ENCODE measurements at regions of chr5 and their contacts with region 1.

Region 1: DNA sequence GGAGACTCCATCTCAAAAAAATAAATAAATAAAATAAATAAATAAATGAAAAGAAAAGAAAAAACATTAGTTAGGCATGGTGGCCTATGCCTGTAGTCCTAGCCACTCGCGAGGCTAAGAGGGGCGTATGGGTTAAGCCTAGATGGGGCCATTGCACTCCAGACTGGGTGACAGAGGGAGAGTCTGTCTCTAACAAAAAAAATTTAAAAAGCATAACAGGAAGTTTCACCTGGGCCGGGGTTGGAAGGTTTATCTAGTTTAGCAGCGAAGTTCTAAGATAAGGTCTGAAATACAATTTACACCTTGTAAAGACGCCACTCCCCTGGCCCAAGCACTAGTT is 18.0 kb downstream of the ZMAT2 start:
- DNase-seq: no peak
- ATAC-seq: peak; percentile 18 to 47
- H3K4me3 ChIP-seq: peak overlapping the region; percentile 44
- H3K27ac ChIP-seq: peak overlapping the region; percentile 84 to 92
- H3K4me1 ChIP-seq: no peaks in the 10 kb centered on the region
- CTCF ChIP-seq: no peak
- EP300 ChIP-seq: no peak
- POLR2A ChIP-seq: no peak
- RAD21 ChIP-seq: no peak

Region 2: DNA sequence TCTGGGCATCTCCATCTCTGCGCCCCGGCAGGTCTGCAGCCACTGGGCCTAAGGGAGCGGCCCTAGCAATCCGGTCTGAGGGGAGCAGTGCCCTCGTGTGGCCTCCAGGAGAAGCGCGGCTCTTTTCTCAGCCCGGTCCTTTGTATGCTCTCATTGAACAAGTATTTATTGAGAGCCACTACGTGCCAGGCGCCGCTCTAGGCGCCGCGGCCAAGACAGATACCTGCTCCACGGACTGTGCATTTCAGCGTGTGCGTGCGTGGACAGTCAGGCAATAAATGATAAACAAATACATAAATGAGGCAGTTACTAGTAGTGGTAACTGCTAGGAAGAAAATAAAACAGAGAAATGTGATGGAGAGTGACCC is 360.5 kb before region 1 on chr5:
- CTCF ChIA-PET with region 1: interaction called, 15 read pairs
- POLR2A ChIA-PET with region 1: no interaction called
- DNase-seq: peak; percentile 89 to 93
- ATAC-seq: peak; percentile 83 to 96
- H3K4me3 ChIP-seq: no peak overlapping the region
- H3K27ac ChIP-seq: peak overlapping the region; percentile 47 to 66; a peak in 5 of 6 replicates
- H3K4me1 ChIP-seq: peaks cover 5% of the 10 kb centered on the region; the same call in 1 of the 3 replicates
- CTCF ChIP-seq: peak; percentile 89
- EP300 ChIP-seq: no peak
- POLR2A ChIP-seq: no peak
- RAD21 ChIP-seq: peak; percentile 81 to 82

Region 3: DNA sequence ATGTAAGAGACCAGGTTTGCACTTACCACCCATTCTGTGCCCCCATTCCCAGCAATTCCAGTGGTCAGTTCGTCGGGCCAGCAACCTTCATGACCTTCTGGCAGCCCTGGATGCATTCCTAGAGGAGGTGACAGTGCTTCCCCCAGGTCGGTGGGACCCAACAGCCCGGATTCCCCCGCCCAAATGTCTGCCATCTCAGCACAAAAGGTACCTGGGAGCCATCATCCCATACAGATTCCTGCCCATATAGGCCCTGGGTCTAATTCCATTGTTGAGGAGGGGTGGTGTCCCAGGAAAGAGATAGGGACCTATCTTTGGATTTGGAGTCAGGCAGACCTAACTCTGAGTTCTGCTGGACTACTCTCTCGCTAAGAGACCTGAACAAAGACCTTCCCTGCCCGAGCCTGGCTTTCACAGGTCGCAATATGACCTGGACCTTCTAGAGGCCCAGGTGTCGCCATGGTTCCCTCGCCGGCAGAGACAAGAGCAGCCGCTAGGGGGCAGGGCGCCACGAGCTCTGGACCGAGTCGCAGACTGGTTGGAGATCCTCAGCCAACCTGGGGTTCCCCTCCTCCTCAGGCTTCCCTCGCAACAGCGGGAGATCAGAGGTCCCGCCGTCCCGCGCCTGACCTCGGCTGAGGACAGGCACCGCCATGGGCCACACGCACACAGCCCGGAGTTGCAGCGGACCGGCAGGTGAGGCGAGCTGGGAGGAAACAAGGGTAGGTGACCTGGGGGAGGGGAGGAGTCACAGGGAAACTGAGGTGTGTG is 355.2 kb before region 1 on chr5:
- CTCF ChIA-PET with region 1: interaction called, 22 read pairs
- POLR2A ChIA-PET with region 1: no interaction called
- DNase-seq: peak; percentile 80 to 88
- ATAC-seq: peak; percentile 77 to 91
- H3K4me3 ChIP-seq: peak overlapping the region; percentile 37
- H3K27ac ChIP-seq: peak overlapping the region; percentile 21 to 80; a peak in 3 of 6 replicates
- H3K4me1 ChIP-seq: no peaks in the 10 kb centered on the region
- CTCF ChIP-seq: peak; percentile 86
- EP300 ChIP-seq: no peak
- POLR2A ChIP-seq: no peak
- RAD21 ChIP-seq: peak; percentile 67 to 69

Region 4: DNA sequence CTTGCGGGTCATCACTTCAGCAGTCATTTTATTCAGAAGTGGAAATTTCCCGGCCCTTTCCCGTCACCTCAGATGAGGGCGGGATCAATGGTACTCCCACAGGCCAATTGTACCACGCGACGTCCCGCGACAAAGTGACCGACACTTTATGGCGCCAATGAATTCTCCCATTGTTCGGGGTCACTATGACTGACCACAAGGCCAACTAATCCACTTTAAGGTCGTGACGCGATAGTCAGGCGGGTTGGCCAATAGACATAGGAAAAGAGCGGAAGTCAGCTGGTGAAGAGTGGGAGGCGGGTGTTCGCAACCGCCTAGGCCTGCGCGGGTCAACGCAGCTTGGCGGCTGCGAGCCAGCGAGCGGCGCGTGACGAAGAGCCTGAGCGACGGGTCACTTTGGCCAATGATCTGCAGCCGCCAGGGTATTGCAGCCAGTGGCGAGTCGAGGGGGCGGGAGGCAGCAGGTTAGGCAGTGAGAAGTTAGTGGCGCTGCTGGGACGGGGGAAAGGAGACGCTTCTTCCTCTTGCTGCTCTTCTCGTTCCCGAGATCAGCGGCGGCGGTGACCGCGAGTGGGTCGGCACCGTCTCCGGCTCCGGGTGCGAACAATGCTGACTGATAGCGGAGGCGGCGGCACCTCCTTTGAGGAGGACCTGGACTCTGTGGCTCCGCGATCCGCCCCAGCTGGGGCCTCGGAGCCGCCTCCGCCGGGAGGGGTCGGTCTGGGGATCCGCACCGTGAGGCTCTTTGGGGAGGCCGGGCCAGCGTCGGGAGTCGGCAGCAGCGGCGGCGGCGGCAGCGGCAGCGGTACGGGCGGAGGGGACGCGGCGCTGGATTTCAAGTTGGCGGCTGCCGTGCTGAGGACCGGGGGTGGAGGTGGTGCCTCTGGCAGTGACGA is 316.6 kb before region 1 on chr5 and contains the start of gene ANKHD1:
- CTCF ChIA-PET with region 1: no interaction called
- POLR2A ChIA-PET with region 1: interaction called, 14 read pairs
- DNase-seq: peak; percentile 97 to 100
- ATAC-seq: peak; percentile 83 to 86
- H3K4me3 ChIP-seq: peak within 1 kb of the TSS; percentile 65
- H3K27ac ChIP-seq: peak within 1 kb of the TSS; percentile 91 to 95
- H3K4me1 ChIP-seq: peaks cover 37% of the 10 kb centered on the region
- CTCF ChIP-seq: no peak
- EP300 ChIP-seq: no peak
- POLR2A ChIP-seq: peak; percentile 85
- RAD21 ChIP-seq: no peak
- polyA plus RNA-seq, gene ANKHD1: 94.1 and 111 TPM in 2 replicates

Region 5: DNA sequence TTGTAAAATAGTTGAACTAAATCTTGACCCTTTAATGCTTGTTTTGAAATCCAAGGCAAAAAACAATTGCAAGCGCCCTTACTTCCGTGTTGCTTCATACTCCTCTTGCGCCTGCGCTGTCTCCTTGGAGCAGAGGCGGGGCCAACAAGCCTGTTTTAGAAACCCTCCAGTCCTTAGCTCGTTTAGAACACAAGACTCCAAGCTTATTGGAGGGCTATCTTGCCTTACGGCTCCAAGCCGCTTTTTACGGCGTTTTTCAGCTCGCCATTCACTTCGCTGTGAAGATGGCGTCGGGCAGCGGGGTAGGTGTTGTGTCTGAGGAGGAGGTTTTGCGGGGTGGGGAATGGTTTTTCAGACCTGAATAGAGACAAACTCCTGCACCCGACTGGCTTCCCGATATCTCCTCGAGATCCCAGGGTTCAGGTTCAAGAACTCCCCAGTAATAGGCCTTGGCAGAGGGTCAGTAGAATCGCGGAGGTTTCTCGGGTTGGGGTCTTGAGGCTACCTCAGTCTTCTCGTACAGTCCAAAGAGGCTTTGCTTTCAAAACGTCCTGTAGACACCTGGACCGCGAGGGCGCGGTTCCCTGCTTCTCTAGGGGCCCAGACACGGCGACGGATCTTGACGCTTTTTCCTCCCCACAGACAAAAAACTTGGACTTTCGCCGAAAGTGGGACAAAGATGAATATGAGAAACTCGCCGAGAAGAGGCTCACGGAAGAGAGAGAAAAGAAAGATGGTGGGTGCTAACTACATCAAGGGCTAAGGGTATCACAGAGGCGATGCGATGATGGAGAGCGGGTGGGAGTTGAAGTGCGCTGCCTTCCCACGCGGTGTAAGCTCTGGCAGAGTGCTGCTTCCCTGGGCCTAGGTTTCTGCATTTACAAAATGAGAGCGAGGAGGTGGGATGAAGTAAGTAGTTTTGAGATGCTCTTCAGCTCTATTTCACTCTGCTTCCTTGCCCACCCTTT is 17.8 kb before region 1 on chr5 and contains the start of gene ZMAT2:
- CTCF ChIA-PET with region 1: no interaction called
- POLR2A ChIA-PET with region 1: interaction called, 14 read pairs
- DNase-seq: peak; percentile 96 to 99
- ATAC-seq: peak; percentile 94 to 98
- H3K4me3 ChIP-seq: peak within 1 kb of the TSS; percentile 93
- H3K27ac ChIP-seq: peak within 1 kb of the TSS; percentile 82 to 88
- H3K4me1 ChIP-seq: peaks cover 11% of the 10 kb centered on the region; the same call in 2 of the 3 replicates
- CTCF ChIP-seq: no peak
- EP300 ChIP-seq: no peak
- POLR2A ChIP-seq: peak; percentile 59
- RAD21 ChIP-seq: no peak
- polyA plus RNA-seq, gene ZMAT2: 62.1 and 90.9 TPM in 2 replicates

Region 6: GRCh38 chr5:140821375-140822280 is 103.4 kb after region 1 on chr5 and contains the start of gene PCDHA5:
- CTCF ChIA-PET with region 1: no interaction called
- POLR2A ChIA-PET with region 1: no interaction called
- DNase-seq: peak; percentile 69 to 73
- ATAC-seq: peak; percentile 85 to 92
- H3K4me3 ChIP-seq: peak within 1 kb of the TSS; percentile 57
- H3K27ac ChIP-seq: peak within 1 kb of the TSS; percentile 53 to 74
- H3K4me1 ChIP-seq: no peaks in the 10 kb centered on the region
- CTCF ChIP-seq: peak; percentile 63
- EP300 ChIP-seq: no peak
- POLR2A ChIP-seq: no peak
- RAD21 ChIP-seq: peak; percentile 43 to 65; a peak in 4 of 5 replicates
- polyA plus RNA-seq, gene PCDHA5: 0.32 and 0.62 TPM in 2 replicates